Activated naive CD4-positive, alpha-beta T cell treated with anti-CD3 and anti-CD28 coated beads, Interleukin-2, amount 10 ng/mL, durations not matched to agents 7 days and 5 days (primary cell): ENCODE measurements at regions of chr20 and their contacts with region 1.

Region 1: GRCh38 chr20:844473-845225 is 11.1 kb downstream of the FAM110A start:
- DNase-seq: peak; percentile 96
- H3K4me3 Mint-ChIP-seq: peak overlapping the region; percentile 97
- H3K27ac Mint-ChIP-seq: peak overlapping the region; percentile 77
- H3K4me1 Mint-ChIP-seq: peaks cover 70% of the 10 kb centered on the region
- H3K27me3 Mint-ChIP-seq: no peaks in the 10 kb centered on the region

Region 2: GRCh38 chr20:833450-834150 is 11.0 kb before region 1 on chr20 and contains the start of gene FAM110A:
- CTCF ChIA-PET with region 1: interaction called, 13 read pairs
- DNase-seq: peak; percentile 98
- H3K4me3 Mint-ChIP-seq: peak within 1 kb of the TSS; percentile 92
- H3K27ac Mint-ChIP-seq: peak within 1 kb of the TSS; percentile 80
- H3K4me1 Mint-ChIP-seq: peaks cover 44% of the 10 kb centered on the region
- H3K27me3 Mint-ChIP-seq: peaks cover 5% of the 10 kb centered on the region